Left colon (tissue), 2 donors: ENCODE measurements at regions of chr9 and their contacts with region 1.

Region 1: DNA sequence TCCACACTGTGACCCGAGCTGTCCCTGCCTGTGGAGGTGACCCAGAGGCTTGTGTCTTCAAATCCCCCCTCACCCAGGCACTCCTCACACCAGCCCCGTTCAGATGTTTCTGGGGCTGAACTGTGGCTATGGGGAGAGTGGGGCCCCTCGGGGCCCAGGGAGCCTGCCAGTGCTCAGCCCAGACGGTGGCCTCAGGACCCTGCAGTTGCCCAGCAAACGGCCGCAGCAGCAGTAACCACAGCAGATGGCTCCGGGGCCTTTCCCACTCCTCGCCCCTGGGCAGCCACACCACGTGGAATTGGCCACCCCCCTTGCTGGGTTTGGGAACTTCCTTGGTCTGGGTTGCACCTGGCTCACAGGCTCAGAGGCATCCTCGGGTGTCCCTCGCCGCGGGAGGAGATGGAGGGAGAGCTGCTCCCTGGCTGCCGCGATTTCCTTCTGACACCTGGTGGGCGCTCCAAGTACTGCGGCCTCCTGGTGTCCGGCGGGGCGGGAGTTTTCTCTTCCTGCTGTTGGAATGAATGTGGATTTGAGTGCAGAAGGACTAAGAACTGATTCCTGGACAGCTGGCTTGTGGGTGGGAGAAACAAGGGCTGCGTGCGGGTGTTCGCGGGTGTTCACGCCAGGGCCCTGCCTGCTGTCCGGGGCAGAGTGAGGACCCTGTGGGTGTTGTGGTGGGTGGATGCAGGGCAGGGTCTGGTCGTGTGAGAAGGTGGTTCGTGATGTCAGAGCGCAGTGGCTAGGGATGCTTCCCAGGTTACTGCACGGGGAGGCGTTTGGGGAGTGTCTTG is 97.5 kb downstream of the COL5A1 start:
- DNase-seq: peak in 1 of 2 donors; percentile 62
- ATAC-seq: peak; percentile 68

Region 2: GRCh38 chr9:134419684-134420076 is 319.4 kb before region 1 on chr9:
- intact Hi-C with region 1: no loop called
- DNase-seq: no peak
- ATAC-seq: no peak

Region 3: DNA sequence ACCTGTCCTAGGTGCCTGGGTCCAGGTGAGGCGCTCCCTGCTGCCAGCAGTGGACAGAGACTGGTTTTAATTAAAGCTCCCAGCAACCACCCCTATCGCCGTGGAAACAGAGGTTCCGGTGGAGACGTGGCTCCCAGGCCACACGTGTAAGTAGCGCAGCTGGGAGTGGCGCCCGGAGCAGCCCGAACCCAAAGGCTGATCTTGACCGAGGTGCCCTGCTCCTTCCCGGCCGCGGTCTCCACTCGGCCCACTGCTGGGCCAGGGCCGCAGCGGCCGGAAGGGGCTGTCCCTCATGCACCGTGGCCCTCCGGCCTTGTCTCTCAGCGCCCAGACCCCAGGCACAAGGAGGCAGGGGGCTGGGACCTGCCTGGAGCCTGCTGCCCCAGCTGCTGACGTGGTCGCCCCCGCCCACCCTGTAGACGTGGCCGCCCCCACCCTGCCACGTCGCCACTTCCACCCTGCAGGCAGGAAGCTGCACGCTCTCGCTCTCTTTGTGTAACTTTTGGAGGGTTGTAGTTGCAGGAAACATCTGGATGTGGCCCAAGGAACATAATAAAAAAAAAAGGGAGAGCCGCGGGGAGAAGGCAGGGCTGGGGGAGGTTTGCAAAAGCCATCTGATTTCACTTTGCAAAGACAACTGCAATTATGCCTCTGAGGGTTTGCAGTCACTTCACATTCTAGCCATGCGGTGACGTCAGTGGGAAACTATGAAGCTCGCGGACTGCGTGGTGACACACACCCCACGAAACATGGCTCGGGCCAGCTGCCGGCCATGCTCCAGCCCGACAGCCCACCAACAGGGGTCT is 282.9 kb before region 1 on chr9:
- intact Hi-C with region 1: loop called in 1 of 2 experiments (anchors 10 kb)
- DNase-seq: peak; percentile 80 to 81
- ATAC-seq: peak; percentile 68

Region 4: DNA sequence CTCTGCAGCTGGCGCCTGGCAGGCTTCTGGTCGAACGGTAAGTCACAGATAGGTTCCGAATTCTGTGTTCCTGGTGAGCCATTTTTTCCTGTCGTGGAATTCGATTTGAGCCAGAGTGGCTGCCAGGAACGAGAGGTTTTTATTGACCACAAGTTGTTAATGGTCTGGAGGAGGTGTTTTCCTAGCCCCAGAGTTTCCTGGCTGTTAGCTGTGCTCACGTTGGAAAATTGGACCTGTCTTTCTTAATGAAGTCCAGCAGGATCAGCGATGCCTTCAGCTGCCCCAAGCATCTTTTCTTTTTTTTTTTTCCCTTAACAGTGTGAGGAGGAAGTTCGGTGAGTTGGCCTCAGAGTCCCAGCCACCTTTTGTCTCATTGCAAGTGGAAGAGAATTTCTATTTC is 34.6 kb before region 1 on chr9:
- intact Hi-C with region 1: loop called in 1 of 2 experiments (anchors 5 kb)
- DNase-seq: no peak
- ATAC-seq: no peak

Region 5: DNA sequence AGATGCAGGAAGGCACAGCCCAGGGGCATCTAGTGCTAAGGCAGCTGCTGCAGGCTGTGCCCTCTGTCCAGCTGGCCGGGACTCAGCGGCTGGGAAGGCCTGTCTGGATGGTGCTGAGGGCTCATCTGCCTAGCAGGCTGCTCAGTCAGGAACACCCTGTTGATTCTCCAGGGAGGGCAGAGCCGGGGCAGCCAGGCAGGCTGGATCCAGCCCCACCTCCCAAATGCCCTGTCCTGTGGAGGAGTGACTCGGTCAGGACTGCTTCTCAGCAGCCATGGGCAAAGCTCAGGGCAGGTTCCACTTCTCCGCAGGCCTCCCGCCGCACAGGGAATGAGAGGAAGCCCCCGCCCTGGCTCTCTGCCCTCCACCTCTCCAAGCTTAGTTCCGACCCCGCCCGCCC is 916.3 kb after region 1 on chr9:
- intact Hi-C with region 1: no loop called
- DNase-seq: no peak
- ATAC-seq: no peak